Ovary (tissue), 10 donors: ENCODE measurements at regions of chr20 and their contacts with region 1.

Region 1: GRCh38 chr20:63864847-63865640 is at the start of gene TPD52L2:
- DNase-seq: peak; percentile 97 to 99 (median 99)
- H3K4me3 ChIP-seq: peak within 1 kb of the TSS; percentile 99
- H3K27ac ChIP-seq: peak within 1 kb of the TSS; percentile 66 to 81
- H3K4me1 ChIP-seq: peaks cover 7% of the 10 kb centered on the region
- H3K27me3 ChIP-seq: no peaks in the 10 kb centered on the region
- CTCF ChIP-seq: no peak
- EP300 ChIP-seq: no peak
- POLR2A ChIP-seq: peak; percentile 72
- total RNA-seq, gene TPD52L2: 51.5 to 78.0 (median 68.8) TPM

Region 2: DNA sequence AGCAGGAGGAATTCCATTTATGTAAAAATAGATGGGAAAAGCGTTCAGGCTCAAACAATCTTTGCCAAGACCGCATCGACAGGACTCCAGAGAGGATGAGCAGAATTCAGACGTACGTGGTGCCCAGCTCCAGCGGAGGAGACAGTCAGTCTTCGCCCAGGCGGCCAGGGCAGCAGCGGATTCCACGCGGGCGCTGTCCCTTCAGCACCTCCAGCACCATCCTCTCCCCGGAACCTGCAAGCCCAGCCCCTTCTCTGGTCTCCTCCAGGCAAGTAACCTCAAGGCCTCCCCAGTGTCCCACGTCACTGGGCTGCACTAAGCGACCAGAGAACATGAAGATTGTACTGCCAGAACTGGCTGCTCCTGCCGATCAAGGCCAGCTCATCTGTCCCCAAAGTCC is 389.8 kb before region 1 on chr20:
- intact Hi-C with region 1: no loop called
- DNase-seq: no peak
- H3K4me3 ChIP-seq: no peak overlapping the region
- H3K27ac ChIP-seq: no peak overlapping the region
- H3K4me1 ChIP-seq: no peaks in the 10 kb centered on the region
- H3K27me3 ChIP-seq: peaks cover 2% of the 10 kb centered on the region
- CTCF ChIP-seq: no peak
- EP300 ChIP-seq: no peak
- POLR2A ChIP-seq: no peak

Region 3: DNA sequence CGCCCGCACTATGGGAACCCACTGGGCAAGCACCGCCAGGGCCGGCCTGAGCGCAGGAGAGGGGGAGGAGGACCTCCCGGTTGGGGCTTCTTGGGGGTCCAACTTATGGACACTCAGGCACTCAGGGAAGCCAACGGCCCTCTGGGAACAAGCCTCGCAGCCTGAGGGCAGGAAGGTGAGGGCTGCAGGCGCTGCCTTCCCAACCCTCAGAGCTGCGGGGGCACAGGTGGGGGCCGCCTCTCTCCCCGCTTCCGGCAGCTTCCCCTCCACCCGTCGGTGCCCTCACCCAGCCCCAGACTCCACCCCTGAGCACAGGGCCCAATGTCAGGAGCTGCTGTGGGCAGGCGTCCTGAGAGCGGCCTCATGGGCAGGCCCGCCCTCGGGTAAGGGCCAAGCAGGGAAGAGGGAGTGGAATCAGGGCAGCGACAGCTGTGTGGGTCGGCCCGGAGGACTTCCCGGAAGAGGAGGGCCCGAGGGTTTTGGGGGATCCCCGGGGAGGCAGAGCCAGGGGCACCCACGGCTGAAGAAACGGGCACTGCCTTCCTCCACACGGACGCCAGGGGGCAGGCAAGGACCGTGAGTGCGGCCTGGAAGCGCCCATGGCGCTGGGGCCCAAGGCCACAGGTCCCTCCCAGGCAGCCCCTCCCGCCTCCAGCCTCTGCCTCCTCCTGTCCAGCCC is 327.4 kb before region 1 on chr20:
- intact Hi-C with region 1: loop called in 3 of 4 experiments (anchors 5 to 10 kb)
- DNase-seq: peak; percentile 62 to 87 (median 80)
- H3K4me3 ChIP-seq: no peak overlapping the region
- H3K27ac ChIP-seq: no peak overlapping the region
- H3K4me1 ChIP-seq: peaks cover 2% of the 10 kb centered on the region
- H3K27me3 ChIP-seq: no peaks in the 10 kb centered on the region
- CTCF ChIP-seq: peak; percentile 74 to 96 (median 93)
- EP300 ChIP-seq: no peak
- POLR2A ChIP-seq: no peak

Region 4: GRCh38 chr20:63775096-63775978 is 89.7 kb before region 1 on chr20:
- intact Hi-C with region 1: loop called in 1 of 4 experiments (anchors 2 kb)
- DNase-seq: peak; percentile 65 to 85 (median 80)
- H3K4me3 ChIP-seq: no peak overlapping the region
- H3K27ac ChIP-seq: peak overlapping the region; percentile 51 to 58
- H3K4me1 ChIP-seq: peaks cover 20% of the 10 kb centered on the region
- H3K27me3 ChIP-seq: no peaks in the 10 kb centered on the region
- CTCF ChIP-seq: peak; percentile 80 to 84 (median 82)
- EP300 ChIP-seq: no peak
- POLR2A ChIP-seq: peak; percentile 10

Region 5: GRCh38 chr20:63782051-63782471 is 83.0 kb before region 1 on chr20:
- intact Hi-C with region 1: loop called in 1 of 4 experiments (anchors 5 kb)
- DNase-seq: no peak
- H3K4me3 ChIP-seq: no peak overlapping the region
- H3K27ac ChIP-seq: no peak overlapping the region
- H3K4me1 ChIP-seq: peaks cover 3% of the 10 kb centered on the region
- H3K27me3 ChIP-seq: no peaks in the 10 kb centered on the region
- CTCF ChIP-seq: no peak
- EP300 ChIP-seq: no peak
- POLR2A ChIP-seq: no peak

Region 6: DNA sequence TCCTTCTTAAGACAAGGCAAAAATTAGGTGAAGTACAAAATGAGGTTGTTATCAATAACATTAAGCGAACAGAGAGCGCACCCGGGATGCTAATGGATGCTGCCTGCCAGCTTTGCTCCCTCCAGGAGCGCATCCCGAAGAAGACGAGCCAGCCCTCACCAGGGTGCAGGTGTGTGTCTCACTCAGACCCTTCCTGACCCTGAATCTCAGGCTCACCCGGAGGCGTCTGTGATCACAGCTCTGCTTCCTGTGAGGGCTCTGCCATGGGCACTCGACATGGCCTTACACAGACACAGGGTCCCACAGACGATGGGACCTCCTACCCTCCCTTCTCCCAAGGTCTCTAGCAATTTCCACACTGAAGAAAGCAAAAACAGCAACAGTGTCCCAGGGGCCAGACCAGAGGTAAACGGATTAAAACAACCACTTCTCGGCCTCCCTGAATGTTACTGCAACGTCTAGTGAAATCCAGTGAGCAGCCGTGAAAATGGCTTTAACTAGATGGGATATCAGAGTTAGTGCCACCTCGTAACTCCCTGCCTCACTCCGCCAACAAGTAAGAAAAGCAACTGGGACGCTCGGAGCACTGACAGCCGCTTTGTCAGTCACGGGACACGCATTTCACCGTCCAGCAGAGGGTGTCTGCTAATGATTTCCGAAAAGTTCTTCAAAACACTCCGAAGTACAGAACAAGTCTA is 45.7 kb before region 1 on chr20:
- intact Hi-C with region 1: loop called in 2 of 4 experiments (anchors 5 kb)
- DNase-seq: peak in 2 of 5 donors; percentile 65 to 73
- H3K4me3 ChIP-seq: no peak overlapping the region
- H3K27ac ChIP-seq: peak overlapping the region; percentile 3 to 6
- H3K4me1 ChIP-seq: peaks cover 8% of the 10 kb centered on the region
- H3K27me3 ChIP-seq: no peaks in the 10 kb centered on the region
- CTCF ChIP-seq: peak; percentile 25 to 44 (median 38)
- EP300 ChIP-seq: no peak
- POLR2A ChIP-seq: no peak

Region 7: DNA sequence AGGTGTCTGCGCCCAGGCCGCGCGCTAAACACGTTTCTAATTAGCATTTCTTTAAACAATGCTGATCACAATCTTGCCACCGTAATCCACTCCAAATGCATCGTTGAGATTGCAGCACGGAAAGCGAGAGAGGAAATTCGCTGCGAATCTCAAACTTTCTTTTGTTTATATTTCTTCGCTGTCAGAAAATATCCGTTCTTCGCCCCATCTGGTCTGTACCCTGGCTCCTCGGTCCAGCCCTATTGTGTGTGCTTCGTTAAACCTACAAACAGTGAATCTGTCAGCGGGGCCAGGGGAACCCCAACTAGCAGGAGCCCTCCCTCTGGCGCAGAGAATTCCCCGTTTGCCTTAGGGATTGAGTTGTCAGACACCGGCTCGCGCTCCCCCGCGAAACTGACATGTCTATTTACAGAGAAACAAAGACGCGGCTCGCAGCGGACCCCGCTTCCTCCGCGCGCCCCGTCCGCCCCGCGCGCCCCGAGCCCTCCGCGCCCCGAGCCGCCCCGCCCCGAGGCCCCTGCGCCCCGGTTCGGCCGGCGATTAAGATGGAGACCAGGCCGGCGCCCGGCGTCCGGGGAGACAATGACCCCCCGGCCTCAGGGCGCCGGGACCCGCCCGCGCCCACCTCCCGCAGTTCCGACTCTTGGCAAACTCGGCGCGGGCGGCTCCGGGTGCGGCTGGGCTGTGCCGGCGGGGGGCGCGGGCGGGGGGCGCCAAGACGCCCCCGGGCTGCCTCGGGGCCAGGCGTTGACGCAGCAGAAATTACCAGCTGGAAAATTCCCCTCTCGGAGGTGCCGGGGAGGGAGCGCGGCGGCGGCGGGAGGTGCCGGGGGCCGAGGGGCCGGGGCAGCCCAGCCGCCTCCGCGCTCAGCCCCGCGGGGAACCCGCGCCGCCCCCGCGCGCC is 34.9 kb before region 1 on chr20:
- intact Hi-C with region 1: loop called in 1 of 4 experiments (anchors 5 kb)
- DNase-seq: peak in 4 of 5 donors; percentile 36 to 69 (median 62)
- H3K4me3 ChIP-seq: peak overlapping the region; percentile 61
- H3K27ac ChIP-seq: peak overlapping the region; percentile 66 to 90
- H3K4me1 ChIP-seq: peaks cover 37% of the 10 kb centered on the region
- H3K27me3 ChIP-seq: no peaks in the 10 kb centered on the region
- CTCF ChIP-seq: no peak
- EP300 ChIP-seq: no peak
- POLR2A ChIP-seq: no peak